ENCODE measurements at regions of chr10 and their contacts with region 1.

Region 1: DNA sequence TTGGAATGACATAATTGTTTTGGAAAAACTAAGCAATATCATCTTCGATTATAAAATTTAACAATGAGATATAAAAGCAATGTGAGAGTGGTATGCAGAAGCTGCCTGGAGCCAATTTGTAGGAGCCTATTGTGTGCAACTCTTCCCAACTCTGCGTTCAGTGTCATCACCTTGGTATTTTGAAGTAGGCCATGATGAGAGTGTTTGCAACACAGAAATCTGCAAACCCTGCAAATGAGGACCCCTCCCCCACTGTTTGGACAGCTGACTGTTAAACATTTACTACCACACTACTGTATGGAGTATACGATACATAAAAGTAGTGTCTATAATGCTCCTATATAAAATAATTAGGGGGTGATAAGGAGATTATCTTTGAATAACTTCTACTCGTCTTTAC is 531.3 kb downstream of the ATRNL1 start:
- DNase-seq: no peak
- ATAC-seq: no peak
- H3K4me3 ChIP-seq: no peak overlapping the region
- H3K27ac ChIP-seq: no peak overlapping the region
- H3K4me1 ChIP-seq: no peaks in the 10 kb centered on the region
- H3K27me3 ChIP-seq: 0 out of 2 replicates have a peak, but pooled peaks cover 3% of the 10 kb centered on the region
- CTCF ChIP-seq: no peak
- POLR2A ChIP-seq: no peak
- RAD21 ChIP-seq: no peak

Region 2: DNA sequence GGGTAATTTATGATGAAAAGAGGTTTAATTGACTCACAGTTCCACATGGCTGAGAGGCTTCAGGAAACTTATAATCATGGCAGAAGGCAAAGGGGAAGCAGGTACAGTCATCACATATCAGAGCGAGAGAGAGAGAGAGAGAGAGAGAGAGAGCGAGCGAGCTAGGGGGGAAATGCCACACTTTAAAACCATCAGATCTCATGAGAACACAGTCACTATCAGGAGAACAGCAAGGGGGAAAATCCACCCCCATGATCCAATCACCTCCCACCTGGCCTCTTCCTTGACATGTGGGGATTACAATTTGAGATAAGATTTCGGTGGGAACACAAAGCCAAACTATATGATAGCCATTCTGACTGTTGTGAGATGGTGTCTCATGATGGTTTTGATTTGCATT is 72.3 kb after region 1 on chr10:
- CTCF ChIA-PET with region 1: no interaction called
- POLR2A ChIA-PET with region 1: no interaction called
- RAD21 ChIA-PET with region 1: no interaction called
- intact Hi-C with region 1: loop called (anchors 2 kb)
- DNase-seq: no peak
- ATAC-seq: no peak
- H3K4me3 ChIP-seq: no peak overlapping the region
- H3K27ac ChIP-seq: no peak overlapping the region
- H3K4me1 ChIP-seq: no peaks in the 10 kb centered on the region
- H3K27me3 ChIP-seq: 0 out of 2 replicates have a peak, but pooled peaks cover 4% of the 10 kb centered on the region
- CTCF ChIP-seq: no peak
- POLR2A ChIP-seq: no peak
- RAD21 ChIP-seq: no peak

Measured in HCT116 (cell line).